ENCODE measurements at regions of chr14 and their contacts with region 1.

Region 1: DNA sequence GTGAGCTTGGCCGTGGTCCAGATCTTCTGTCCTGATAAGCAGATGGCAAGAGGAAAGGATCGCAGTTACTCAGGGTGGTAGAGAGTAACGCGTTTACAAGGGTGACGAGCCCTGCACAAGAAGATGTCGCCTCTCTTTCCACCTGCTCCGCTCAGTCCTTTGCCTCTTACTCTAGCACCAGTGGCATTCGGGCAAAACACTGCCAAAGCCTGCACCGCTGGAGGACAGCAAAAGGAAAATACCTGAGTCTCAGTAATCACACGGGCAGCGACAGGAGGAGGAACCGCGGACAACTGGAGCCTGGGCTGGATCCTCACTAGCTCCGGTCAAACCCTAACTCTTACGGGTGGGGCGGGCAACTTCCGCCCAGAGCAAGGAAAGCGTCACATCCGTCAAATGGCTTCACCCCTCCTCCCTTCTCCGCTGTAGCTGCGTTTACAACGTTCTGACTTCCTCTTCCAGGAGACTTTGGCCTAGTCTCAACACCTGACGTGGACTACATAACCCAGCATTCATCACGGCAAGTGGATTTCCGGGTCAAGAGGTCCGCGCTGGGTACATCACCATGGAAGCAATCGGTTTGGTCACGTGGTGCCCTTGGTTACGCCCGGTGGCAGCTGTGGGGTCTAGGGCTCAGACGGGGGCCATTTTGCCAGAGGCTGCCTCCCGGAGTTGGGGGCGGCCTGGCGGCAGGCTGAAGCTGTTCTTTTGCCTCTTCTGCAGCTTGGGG is at the starts of genes KLHL28 and TOGARAM1:
- DNase-seq: peak; percentile 94 to 100 (median 98)
- H3K4me3 ChIP-seq: peak within 1 kb of the TSS; percentile 88 to 93
- H3K4me3 Mint-ChIP-seq: no peak within 1 kb of the TSS
- H3K27ac ChIP-seq: peak within 1 kb of the TSS; percentile 92
- H3K27ac Mint-ChIP-seq: peak within 1 kb of the TSS in 1 of 7 donors; percentile 83
- H3K4me1 ChIP-seq: peaks cover 74% of the 10 kb centered on the region
- H3K4me1 Mint-ChIP-seq: peaks cover 42 to 51% (median 45%) of the 10 kb centered on the region in 4 donors
- H3K27me3 ChIP-seq: no peaks in the 10 kb centered on the region
- H3K27me3 Mint-ChIP-seq: no peaks in the 10 kb centered on the region
- total RNA-seq, gene KLHL28: 38.4 to 40.6 TPM
- total RNA-seq, gene TOGARAM1: 11.3 to 11.5 TPM

Region 2: GRCh38 chr14:44846232-44846824 is 115.4 kb before region 1 on chr14:
- CTCF ChIA-PET with region 1: no interaction called
- POLR2A ChIA-PET with region 1: no interaction called
- intact Hi-C with region 1: no loop called
- DNase-seq: peak in 4 of 5 donors; percentile 30 to 43 (median 34)
- H3K4me3 ChIP-seq: no peak overlapping the region
- H3K4me3 Mint-ChIP-seq: peak overlapping the region in 1 of 8 donors; percentile 40
- H3K27ac ChIP-seq: no peak overlapping the region
- H3K27ac Mint-ChIP-seq: no peak overlapping the region
- H3K4me1 ChIP-seq: no peaks in the 10 kb centered on the region
- H3K4me1 Mint-ChIP-seq: peaks cover 0 to 4% (median 0%) of the 10 kb centered on the region in 4 donors
- H3K27me3 ChIP-seq: no peaks in the 10 kb centered on the region
- H3K27me3 Mint-ChIP-seq: peaks cover 0 to 2% of the 10 kb centered on the region in 2 donors

Region 3: GRCh38 chr14:44912041-44912869 is 49.5 kb before region 1 on chr14:
- CTCF ChIA-PET with region 1: interaction called, 6 read pairs
- POLR2A ChIA-PET with region 1: interaction called, 10 read pairs
- intact Hi-C with region 1: no loop called
- DNase-seq: no peak
- H3K4me3 ChIP-seq: no peak overlapping the region
- H3K4me3 Mint-ChIP-seq: peak overlapping the region in 4 of 8 donors; percentile 26 to 46 (median 31)
- H3K27ac ChIP-seq: no peak overlapping the region
- H3K27ac Mint-ChIP-seq: no peak overlapping the region
- H3K4me1 ChIP-seq: no peaks in the 10 kb centered on the region
- H3K4me1 Mint-ChIP-seq: peaks cover 4 to 10% (median 6%) of the 10 kb centered on the region in 4 donors
- H3K27me3 ChIP-seq: peaks cover 17% of the 10 kb centered on the region
- H3K27me3 Mint-ChIP-seq: peaks cover 22 to 30% of the 10 kb centered on the region in 2 donors

Region 4: GRCh38 chr14:45060551-45060950 is 98.8 kb after region 1 on chr14:
- CTCF ChIA-PET with region 1: no interaction called
- POLR2A ChIA-PET with region 1: no interaction called
- intact Hi-C with region 1: no loop called
- DNase-seq: no peak
- H3K4me3 ChIP-seq: no peak overlapping the region
- H3K4me3 Mint-ChIP-seq: no peak overlapping the region
- H3K27ac ChIP-seq: no peak overlapping the region
- H3K27ac Mint-ChIP-seq: no peak overlapping the region
- H3K4me1 ChIP-seq: no peaks in the 10 kb centered on the region
- H3K4me1 Mint-ChIP-seq: peaks cover 0 to 2% (median 0%) of the 10 kb centered on the region in 4 donors
- H3K27me3 ChIP-seq: no peaks in the 10 kb centered on the region
- H3K27me3 Mint-ChIP-seq: no peaks in the 10 kb centered on the region

Region 5: GRCh38 chr14:45083971-45084722 is 122.4 kb after region 1 on chr14 and contains the start of gene PRPF39:
- CTCF ChIA-PET with region 1: no interaction called
- POLR2A ChIA-PET with region 1: interaction called, 28 read pairs
- intact Hi-C with region 1: loop called (anchors 1 kb)
- DNase-seq: peak; percentile 93 to 94 (median 94)
- H3K4me3 ChIP-seq: peak within 1 kb of the TSS; percentile 69 to 98
- H3K4me3 Mint-ChIP-seq: peak within 1 kb of the TSS; percentile 95 to 99 (median 97)
- H3K27ac ChIP-seq: peak within 1 kb of the TSS; percentile 86
- H3K27ac Mint-ChIP-seq: peak within 1 kb of the TSS; percentile 92 to 97 (median 95)
- H3K4me1 ChIP-seq: peaks cover 55% of the 10 kb centered on the region
- H3K4me1 Mint-ChIP-seq: peaks cover 35 to 59% (median 48%) of the 10 kb centered on the region in 4 donors
- H3K27me3 ChIP-seq: no peaks in the 10 kb centered on the region
- H3K27me3 Mint-ChIP-seq: no peaks in the 10 kb centered on the region
- total RNA-seq, gene PRPF39: 80.7 to 85.6 TPM

Region 6: DNA sequence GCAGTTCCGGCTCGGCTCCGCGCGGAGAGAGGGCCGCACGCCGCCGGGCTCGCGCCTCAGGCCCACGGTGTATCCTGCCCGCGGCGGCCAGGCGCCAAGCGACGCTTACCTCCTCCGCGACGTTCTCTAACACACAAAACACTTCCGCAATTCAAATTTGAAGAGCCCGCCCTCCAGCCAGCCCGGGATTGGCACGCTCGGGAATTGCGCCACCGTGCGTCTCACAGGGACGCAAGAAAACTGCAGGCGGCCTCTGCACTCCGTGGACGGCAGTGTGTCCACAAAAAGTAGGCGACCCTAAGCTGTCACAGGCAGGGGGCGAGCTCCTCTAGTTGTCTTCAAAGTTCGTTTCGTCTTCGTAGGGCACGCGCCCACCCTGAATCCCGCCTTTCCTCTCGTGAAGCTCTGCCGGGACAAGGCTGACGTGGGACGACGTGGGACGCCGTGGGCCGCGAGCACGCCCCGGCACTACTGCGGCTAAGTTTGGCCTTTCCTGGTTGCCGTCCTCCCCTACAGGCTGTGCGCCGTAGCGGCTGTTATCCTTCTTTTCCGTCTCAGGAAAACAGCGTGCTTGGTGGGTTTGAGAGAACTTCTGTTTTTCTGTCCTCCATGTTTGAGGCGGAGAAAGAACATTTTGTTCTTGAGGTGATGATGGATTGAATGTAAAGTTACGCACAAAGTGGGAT is 291.4 kb after region 1 on chr14 and contains the start of gene MIS18BP1:
- CTCF ChIA-PET with region 1: interaction called, 13 read pairs
- POLR2A ChIA-PET with region 1: interaction called, 44 read pairs
- intact Hi-C with region 1: loop called (anchors 1 kb)
- DNase-seq: peak; percentile 92 to 95 (median 94)
- H3K4me3 ChIP-seq: peak within 1 kb of the TSS; percentile 83 to 93
- H3K4me3 Mint-ChIP-seq: peak within 1 kb of the TSS; percentile 91 to 97 (median 94)
- H3K27ac ChIP-seq: peak within 1 kb of the TSS; percentile 71
- H3K27ac Mint-ChIP-seq: peak within 1 kb of the TSS; percentile 94 to 97 (median 96)
- H3K4me1 ChIP-seq: peaks cover 42% of the 10 kb centered on the region
- H3K4me1 Mint-ChIP-seq: peaks cover 17 to 33% (median 25%) of the 10 kb centered on the region in 4 donors
- H3K27me3 ChIP-seq: no peaks in the 10 kb centered on the region
- H3K27me3 Mint-ChIP-seq: no peaks in the 10 kb centered on the region
- total RNA-seq, gene MIS18BP1: 30.6 to 31.2 TPM

Measured in CD4-positive, alpha-beta memory T cell (primary cell).